T-cell (primary cell): ENCODE measurements at regions of chr17 and their contacts with region 1.

Region 1: GRCh38 chr17:4789901-4790704 is 1.3 kb downstream of the GLTPD2 start:
- DNase-seq: peak; percentile 53 to 88 (median 68)
- ATAC-seq: peak; percentile 91 to 95 (median 94)
- H3K4me3 ChIP-seq: peak overlapping the region; percentile 47 to 64
- H3K4me3 Mint-ChIP-seq: peak overlapping the region; percentile 83 to 91 (median 85)
- H3K27ac ChIP-seq: peak overlapping the region; percentile 47
- H3K27ac Mint-ChIP-seq: peak overlapping the region; percentile 68 to 82
- H3K4me1 ChIP-seq: peaks cover 8 to 35% of the 10 kb centered on the region in 2 experiments
- H3K4me1 Mint-ChIP-seq: peaks cover 18 to 32% (median 25%) of the 10 kb centered on the region in 3 donors
- H3K27me3 ChIP-seq: peaks cover 7 to 42% of the 10 kb centered on the region in 2 experiments
- H3K27me3 Mint-ChIP-seq: peaks cover 22 to 30% of the 10 kb centered on the region in 2 donors

Region 2: GRCh38 chr17:4709794-4710692 is 80.1 kb before region 1 on chr17 and contains the start of gene ARRB2:
- CTCF ChIA-PET with region 1: interaction called in 1 of 2 experiments, 12 read pairs
- POLR2A ChIA-PET with region 1: no interaction called
- DNase-seq: peak; percentile 95 to 100 (median 99)
- ATAC-seq: peak; percentile 80 to 85 (median 82)
- H3K4me3 ChIP-seq: peak within 1 kb of the TSS; percentile 71 to 93
- H3K4me3 Mint-ChIP-seq: peak within 1 kb of the TSS; percentile 90 to 99 (median 94)
- H3K27ac ChIP-seq: peak within 1 kb of the TSS; percentile 77
- H3K27ac Mint-ChIP-seq: peak within 1 kb of the TSS; percentile 95 to 99
- H3K4me1 ChIP-seq: peaks cover 29 to 52% of the 10 kb centered on the region in 2 experiments
- H3K4me1 Mint-ChIP-seq: peaks cover 34 to 56% (median 46%) of the 10 kb centered on the region in 3 donors
- H3K27me3 ChIP-seq: no peaks in the 10 kb centered on the region
- H3K27me3 Mint-ChIP-seq: no peaks in the 10 kb centered on the region
- total RNA-seq, gene ARRB2: 247 to 374 (median 325) TPM

Region 3: GRCh38 chr17:4891411-4892342 is 101.6 kb after region 1 on chr17:
- CTCF ChIA-PET with region 1: interaction called, 4 to 10 read pairs
- POLR2A ChIA-PET with region 1: no interaction called
- DNase-seq: no peak
- ATAC-seq: no peak
- H3K4me3 ChIP-seq: no peak overlapping the region
- H3K4me3 Mint-ChIP-seq: no peak overlapping the region
- H3K27ac ChIP-seq: no peak overlapping the region
- H3K27ac Mint-ChIP-seq: no peak overlapping the region
- H3K4me1 ChIP-seq: no peaks in the 10 kb centered on the region
- H3K4me1 Mint-ChIP-seq: peaks cover 0 to 2% (median 0%) of the 10 kb centered on the region in 3 donors
- H3K27me3 ChIP-seq: no peaks in the 10 kb centered on the region
- H3K27me3 Mint-ChIP-seq: no peaks in the 10 kb centered on the region